PC-3 (cell line): ENCODE measurements at regions of chr20 and their contacts with region 1.

Region 1: DNA sequence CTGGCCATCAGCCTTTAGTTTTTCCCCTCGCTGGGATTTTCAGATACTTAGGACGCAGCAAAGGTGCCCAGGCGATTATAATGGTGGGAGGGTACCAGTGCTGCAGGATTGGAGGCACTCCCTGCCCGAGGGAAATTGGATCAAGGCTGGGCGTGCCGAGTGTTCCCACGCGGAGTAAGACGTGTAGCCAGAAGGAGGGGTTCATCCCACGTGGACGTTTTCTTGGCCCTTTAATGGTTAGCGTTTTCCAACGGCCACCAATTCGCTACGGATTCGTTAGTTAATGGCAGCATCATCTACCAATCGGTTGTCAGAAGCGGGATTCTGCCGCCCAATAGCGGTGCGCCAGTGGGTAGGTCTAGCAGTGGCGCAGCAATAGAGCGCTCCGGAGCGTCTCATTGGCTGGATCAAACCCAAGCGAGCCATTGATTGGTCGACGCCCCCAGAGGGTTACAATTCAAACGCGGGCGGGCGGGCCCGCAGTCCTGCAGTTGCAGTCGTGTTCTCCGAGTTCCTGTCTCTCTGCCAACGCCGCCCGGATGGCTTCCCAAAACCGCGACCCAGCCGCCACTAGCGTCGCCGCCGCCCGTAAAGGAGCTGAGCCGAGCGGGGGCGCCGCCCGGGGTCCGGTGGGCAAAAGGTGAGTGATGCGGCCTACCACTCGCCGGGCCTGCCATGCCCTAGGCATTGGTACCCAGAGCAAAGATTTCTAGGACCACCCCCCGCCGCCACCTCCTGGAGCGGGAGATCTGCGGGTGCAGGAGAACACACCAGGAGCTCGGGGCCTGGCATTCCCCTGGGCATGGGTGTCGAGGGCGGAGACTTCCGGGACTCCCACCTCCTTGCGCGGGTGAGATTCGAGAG is at the start of gene UBE2C:
- DNase-seq: peak; percentile 100
- ATAC-seq: peak; percentile 95
- H3K4me3 ChIP-seq: peak within 1 kb of the TSS; percentile 98
- H3K27ac ChIP-seq: peak within 1 kb of the TSS; percentile 82
- H3K4me1 ChIP-seq: peaks cover 36% of the 10 kb centered on the region
- H3K27me3 ChIP-seq: no peaks in the 10 kb centered on the region
- CTCF ChIP-seq: no peak
- total RNA-seq, gene UBE2C: 251 and 304 TPM in 2 replicates

Region 2: DNA sequence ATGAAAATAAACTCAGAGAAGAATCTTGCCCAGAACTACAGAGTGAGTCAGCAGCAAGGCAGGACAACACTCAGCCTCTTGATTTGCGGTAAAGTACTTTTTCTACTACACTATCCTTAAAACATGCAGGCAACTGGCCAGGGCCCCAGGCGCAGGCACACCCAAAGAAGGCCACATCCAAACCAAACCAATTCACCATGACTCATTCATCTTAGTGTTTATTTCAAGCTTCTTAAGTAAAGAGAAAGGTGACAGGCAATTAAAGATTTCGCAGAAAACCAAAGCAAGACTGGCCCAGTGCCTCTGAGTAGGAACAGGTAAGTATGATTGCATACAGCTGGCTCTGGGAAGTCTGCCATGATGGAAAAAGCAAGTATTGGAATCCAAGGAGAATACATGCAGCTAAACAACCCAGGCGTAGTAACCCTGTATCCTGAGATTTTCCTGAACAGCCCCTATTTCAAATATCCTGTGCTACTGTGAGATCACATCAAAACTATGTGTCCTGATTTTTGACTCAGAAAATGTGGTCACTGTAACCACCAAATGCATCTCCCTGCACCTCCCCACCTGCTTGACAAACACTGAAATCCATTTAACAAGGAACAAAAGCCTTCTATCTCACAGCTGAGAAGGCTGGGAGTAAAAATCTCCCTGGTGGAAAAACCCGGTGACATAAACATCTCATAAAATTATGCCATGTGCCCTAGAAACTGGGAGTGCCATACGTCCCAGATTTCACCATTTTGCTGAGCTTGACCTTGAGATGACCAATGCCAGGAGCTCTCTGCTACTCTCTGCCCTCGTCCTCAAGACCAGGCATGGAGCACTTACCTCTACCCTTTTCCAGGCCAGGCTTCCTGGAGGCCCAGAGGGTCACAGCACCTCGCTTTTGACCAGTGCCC is 33.1 kb before region 1 on chr20:
- CTCF ChIA-PET with region 1: no interaction called
- POLR2A ChIA-PET with region 1: no interaction called
- intact Hi-C with region 1: loop called (anchors 1 kb)
- DNase-seq: peak; percentile 99
- ATAC-seq: peak; percentile 63
- H3K4me3 ChIP-seq: peak overlapping the region; percentile 11; the same call in 1 of the 2 replicates
- H3K27ac ChIP-seq: peak overlapping the region; percentile 99
- H3K4me1 ChIP-seq: peaks cover 62% of the 10 kb centered on the region
- H3K27me3 ChIP-seq: no peaks in the 10 kb centered on the region
- CTCF ChIP-seq: no peak

Region 3: DNA sequence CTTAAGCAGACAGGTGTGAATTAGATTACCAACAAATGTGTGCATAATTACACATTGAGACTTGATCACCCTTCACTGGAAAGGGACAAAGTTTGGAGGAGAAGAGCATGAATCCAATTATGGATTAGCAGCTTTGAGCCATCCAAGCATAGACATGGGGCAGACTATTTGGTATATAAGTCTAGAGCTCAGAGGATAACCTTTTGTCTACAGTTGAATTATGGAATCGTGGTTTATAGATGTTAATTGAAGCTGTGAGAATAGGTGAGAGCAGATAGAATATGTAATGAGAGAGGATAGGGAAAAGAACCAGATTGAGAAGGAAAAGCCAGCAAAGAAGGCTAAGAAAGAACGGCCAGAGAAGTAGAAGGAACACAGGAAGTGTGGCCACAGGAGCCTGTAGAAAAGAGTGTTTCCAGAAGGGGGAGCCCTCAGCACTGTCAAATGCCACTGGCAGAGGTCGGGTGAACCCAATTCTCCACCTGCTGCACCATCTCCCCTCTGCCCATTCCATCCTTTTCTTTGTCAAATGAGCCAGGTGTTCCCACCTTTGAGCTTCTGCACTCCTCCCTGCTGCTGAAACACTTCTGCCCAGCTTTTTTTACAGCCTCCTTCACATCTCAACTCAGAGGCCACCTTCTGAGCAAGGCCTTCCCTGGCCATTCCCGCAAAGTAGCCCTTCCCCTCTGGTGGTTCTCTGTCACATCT is 13.3 kb before region 1 on chr20:
- CTCF ChIA-PET with region 1: interaction called, 7 read pairs
- POLR2A ChIA-PET with region 1: interaction called, 11 read pairs
- intact Hi-C with region 1: loop called (anchors 2 kb)
- DNase-seq: peak; percentile 82
- ATAC-seq: peak; percentile 88
- H3K4me3 ChIP-seq: no peak overlapping the region
- H3K27ac ChIP-seq: peak overlapping the region; percentile 11
- H3K4me1 ChIP-seq: 0 out of 2 replicates have a peak, but pooled peaks cover under 1% of the 10 kb centered on the region
- H3K27me3 ChIP-seq: no peaks in the 10 kb centered on the region
- CTCF ChIP-seq: peak; percentile 90

Region 4: DNA sequence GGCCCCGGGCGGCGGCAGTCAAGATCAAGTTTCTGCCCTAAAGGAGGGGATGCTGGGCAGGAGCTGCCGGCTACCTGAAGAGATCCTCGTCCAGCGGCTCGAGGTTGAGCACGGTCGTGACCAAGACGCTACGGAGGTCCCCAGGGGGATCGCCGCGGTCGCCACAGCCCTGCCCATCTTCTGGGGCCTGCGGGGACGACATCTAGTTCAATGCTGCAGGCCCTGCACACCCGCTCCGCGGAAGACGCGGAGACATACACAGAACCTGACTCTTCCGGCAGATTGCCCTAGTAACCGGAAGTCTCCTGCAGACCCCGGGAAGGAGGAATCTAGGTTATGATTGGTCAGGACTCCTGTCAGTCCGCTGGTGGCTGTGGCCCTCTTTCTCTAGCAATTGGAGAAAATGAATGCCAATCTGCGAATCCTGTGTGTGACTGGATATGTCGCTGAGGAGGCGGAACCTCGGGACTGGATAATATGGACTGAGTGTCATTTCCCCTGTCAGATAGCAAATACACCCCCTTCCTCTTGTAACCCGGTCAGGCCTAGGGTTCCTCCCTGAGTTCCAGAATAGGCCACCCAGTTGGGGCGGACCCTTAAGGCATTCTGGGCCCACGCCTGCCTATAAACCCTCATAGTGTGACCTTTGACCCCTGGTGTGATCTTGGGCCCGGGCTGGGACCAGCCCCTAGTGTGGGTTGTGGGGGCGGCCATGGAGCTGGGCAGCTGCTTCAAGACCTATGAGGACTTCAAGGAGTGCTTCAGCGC is 44.9 kb after region 1 on chr20 and contains the starts of genes ACOT8 and ZSWIM3:
- CTCF ChIA-PET with region 1: no interaction called
- POLR2A ChIA-PET with region 1: no interaction called
- intact Hi-C with region 1: loop called (anchors 1 kb)
- DNase-seq: peak; percentile 100
- ATAC-seq: peak; percentile 97
- H3K4me3 ChIP-seq: peak within 1 kb of the TSS; percentile 87
- H3K27ac ChIP-seq: peak within 1 kb of the TSS; percentile 8; the same call in 1 of the 2 replicates
- H3K4me1 ChIP-seq: peaks cover 30% of the 10 kb centered on the region
- H3K27me3 ChIP-seq: no peaks in the 10 kb centered on the region
- CTCF ChIP-seq: no peak
- total RNA-seq, gene ACOT8: 57.4 and 58.8 TPM in 2 replicates
- total RNA-seq, gene ZSWIM3: 2.1 and 4.2 TPM in 2 replicates

Region 5: DNA sequence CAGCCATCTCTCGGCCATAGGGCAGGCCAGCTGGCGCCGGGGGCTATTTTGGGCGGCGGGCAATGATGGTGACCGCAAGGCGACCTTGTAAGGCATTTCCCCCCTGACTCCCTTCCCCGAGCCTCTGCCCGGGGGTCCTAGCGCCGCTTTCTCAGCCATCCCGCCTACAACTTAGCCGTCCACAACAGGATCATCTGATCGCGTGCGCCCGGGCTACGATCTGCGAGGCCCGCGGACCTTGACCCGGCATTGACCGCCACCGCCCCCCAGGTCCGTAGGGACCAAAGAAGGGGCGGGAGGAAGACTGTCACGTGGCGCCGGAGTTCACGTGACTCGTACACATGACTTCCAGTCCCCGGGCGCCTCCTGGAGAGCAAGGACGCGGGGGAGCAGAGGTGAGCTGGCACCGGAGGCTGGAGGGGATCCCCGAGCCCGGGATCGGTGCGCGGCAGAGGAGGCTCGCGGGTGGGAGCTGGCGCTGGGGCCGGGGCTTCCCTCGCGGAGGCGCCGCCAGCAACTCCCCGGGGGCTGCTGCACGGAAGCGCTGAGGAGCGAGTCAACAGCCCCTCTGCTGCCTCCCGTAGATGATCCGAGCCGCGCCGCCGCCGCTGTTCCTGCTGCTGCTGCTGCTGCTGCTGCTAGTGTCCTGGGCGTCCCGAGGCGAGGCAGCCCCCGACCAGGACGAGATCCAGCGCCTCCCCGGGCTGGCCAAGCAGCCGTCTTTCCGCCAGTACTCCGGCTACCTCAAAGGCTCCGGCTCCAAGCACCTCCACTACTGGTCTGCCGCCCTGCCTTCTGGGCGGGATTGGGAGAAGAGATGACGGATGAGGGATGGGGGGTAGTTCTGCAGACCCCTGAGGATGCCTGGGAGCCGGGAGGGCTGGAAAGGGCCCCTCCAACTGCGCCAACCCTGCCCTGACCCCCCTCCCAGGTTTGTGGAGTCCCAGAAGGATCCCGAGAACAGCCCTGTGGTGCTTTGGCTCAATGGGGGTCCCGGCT is 78.9 kb after region 1 on chr20 and contains the starts of genes CTSA and NEURL2:
- CTCF ChIA-PET with region 1: interaction called, 3 read pairs
- POLR2A ChIA-PET with region 1: interaction called, 8 read pairs
- intact Hi-C with region 1: loop called (anchors 5 kb)
- DNase-seq: peak; percentile 87
- ATAC-seq: peak; percentile 75
- H3K4me3 ChIP-seq: peak within 1 kb of the TSS; percentile 78
- H3K27ac ChIP-seq: peak within 1 kb of the TSS; percentile 16
- H3K4me1 ChIP-seq: peaks cover 23% of the 10 kb centered on the region
- H3K27me3 ChIP-seq: no peaks in the 10 kb centered on the region
- CTCF ChIP-seq: peak; percentile 31
- total RNA-seq, gene CTSA: 98.0 and 129 TPM in 2 replicates
- total RNA-seq, gene NEURL2: 2.3 and 3.7 TPM in 2 replicates

Region 6: GRCh38 chr20:45924391-45925261 is 112.2 kb after region 1 on chr20:
- CTCF ChIA-PET with region 1: no interaction called
- POLR2A ChIA-PET with region 1: no interaction called
- intact Hi-C with region 1: no loop called
- DNase-seq: no peak
- ATAC-seq: peak; percentile 39
- H3K4me3 ChIP-seq: no peak overlapping the region
- H3K27ac ChIP-seq: no peak overlapping the region
- H3K4me1 ChIP-seq: peaks cover 8% of the 10 kb centered on the region
- H3K27me3 ChIP-seq: no peaks in the 10 kb centered on the region
- CTCF ChIP-seq: no peak